PC-3 (cell line): ENCODE measurements at regions of chr9 and their contacts with region 1.

Region 1: DNA sequence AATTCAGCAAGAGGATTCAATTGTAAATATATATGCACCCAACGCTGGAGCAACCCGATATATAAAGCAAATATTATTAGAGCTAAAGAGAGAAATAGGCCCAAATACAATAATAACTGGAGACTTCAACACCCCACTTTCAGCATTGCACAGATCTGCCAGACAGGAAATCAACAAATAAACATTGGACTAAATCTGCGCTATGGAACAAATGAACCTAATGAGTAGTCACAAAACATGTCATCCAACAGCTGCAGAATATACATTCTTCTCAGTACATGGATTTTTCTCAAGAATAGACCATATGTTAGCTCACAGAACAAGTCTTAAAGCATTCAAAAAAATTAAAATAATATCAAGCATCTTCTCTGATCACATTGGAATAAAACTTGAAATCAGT is 86.1 kb upstream of the SLC1A1 start:
- DNase-seq: no peak
- ATAC-seq: no peak
- H3K4me3 ChIP-seq: no peak overlapping the region
- H3K27ac ChIP-seq: no peak overlapping the region
- H3K4me1 ChIP-seq: no peaks in the 10 kb centered on the region
- H3K27me3 ChIP-seq: no peaks in the 10 kb centered on the region
- CTCF ChIP-seq: no peak

Region 2: GRCh38 chr9:4393806-4394523 is 10.2 kb before region 1 on chr9:
- CTCF ChIA-PET with region 1: no interaction called
- POLR2A ChIA-PET with region 1: no interaction called
- intact Hi-C with region 1: loop called (anchors 2 kb)
- DNase-seq: no peak
- ATAC-seq: no peak
- H3K4me3 ChIP-seq: no peak overlapping the region
- H3K27ac ChIP-seq: no peak overlapping the region
- H3K4me1 ChIP-seq: no peaks in the 10 kb centered on the region
- H3K27me3 ChIP-seq: no peaks in the 10 kb centered on the region
- CTCF ChIP-seq: no peak